Naive thymus-derived CD4-positive, alpha-beta T cell (primary cell): ENCODE measurements at regions of chr7 and their contacts with region 1.

Region 1: DNA sequence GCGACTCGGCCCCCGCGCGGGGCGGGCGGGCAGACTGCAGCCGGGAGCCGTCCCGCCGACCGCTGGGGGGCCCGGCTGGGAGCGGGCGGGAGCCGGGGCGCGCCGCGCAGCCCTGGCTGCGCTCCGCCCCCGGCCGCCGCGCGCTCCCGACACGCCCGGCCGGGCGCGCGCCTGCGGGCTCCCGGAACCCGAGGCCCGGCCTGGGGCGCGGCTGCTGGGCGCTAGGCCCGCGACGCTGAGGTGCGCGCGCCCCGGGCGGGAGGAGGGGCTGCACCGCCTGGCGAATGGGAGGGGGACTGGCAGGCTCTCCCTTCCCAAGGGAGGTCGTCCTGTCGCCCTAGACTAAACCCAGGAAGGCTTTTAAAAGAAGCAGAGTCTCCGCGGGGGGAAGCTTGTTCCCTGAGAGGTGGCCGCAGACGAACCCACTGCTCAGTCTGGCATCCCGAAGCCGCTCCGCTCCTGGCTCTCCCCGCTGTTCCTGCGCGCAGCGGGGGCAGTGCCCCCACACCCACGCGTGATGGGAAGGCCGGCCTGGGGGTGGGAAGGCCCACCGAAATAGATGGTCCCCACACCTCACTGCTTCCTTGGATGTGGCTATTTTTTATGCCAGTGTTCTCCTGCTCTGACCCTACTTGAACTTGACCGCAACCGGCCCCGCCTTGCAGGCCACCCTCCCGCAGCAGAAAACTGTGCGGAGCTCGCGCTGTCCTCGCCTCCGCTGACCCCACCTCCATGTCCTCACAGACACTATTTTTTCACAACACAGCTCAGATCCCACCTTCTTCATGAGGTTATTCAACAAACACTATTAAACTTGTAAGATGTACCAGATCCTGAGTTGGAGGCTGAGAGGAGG is at the start of gene VOPP1:
- DNase-seq: peak; percentile 40 to 79 (median 66)
- ATAC-seq: peak; percentile 81
- H3K4me3 ChIP-seq: peak within 1 kb of the TSS; percentile 87
- H3K4me3 Mint-ChIP-seq: peak within 1 kb of the TSS; percentile 87 to 100 (median 94)
- H3K27ac ChIP-seq: peak within 1 kb of the TSS; percentile 79
- H3K27ac Mint-ChIP-seq: peak within 1 kb of the TSS; percentile 85 to 96 (median 92)
- H3K4me1 ChIP-seq: peaks cover 42 to 45% of the 10 kb centered on the region in 2 donors
- H3K4me1 Mint-ChIP-seq: peaks cover 45 to 65% (median 60%) of the 10 kb centered on the region in 7 donors
- H3K27me3 ChIP-seq: no peaks in the 10 kb centered on the region
- H3K27me3 Mint-ChIP-seq: no peaks in the 10 kb centered on the region
- total RNA-seq, gene VOPP1: 66.2 to 111 (median 82.0) TPM

Region 2: DNA sequence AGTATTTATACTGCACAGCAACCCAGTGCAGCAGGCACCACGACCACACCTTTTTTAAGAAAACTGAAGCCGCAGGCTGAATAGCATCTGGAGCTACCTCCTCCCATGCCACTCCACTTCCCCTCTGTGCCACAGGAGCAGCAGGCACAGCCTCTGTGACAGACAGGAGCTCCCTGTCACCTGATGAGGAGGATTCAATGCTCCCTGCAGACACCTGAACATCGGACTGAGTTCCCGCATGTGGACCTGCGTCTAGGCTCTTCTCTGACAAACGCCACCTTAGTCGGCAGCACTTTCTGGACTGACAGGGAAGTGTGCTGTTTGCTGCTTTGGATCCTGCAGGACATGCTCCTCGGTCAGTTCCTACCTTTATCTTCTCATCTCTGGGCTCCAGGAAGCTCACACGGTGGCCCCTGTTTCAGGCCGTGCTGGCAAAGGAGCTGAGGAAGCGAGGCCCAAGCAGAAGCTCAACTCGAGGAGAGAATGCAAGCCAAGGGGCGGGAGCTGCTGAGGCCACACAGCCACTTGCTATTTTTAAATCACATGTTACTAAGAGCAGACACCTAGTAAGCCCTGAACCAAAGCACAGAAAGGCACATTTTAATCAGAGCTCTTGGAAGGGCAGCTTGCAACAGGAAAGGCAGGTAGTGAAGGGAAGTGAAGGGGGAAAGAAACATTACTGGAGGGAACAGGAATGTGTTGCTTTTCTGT is 56.9 kb before region 1 on chr7:
- CTCF ChIA-PET with region 1: no interaction called
- POLR2A ChIA-PET with region 1: interaction called, 6 read pairs
- intact Hi-C with region 1: loop called in 1 of 2 experiments (anchors 5 kb)
- DNase-seq: no peak
- ATAC-seq: no peak
- H3K4me3 ChIP-seq: no peak overlapping the region
- H3K4me3 Mint-ChIP-seq: peak overlapping the region in 1 of 10 donors; percentile 4
- H3K27ac ChIP-seq: no peak overlapping the region
- H3K27ac Mint-ChIP-seq: peak overlapping the region in 6 of 9 donors; percentile 8 to 59 (median 20)
- H3K4me1 ChIP-seq: peaks cover 0 to 23% of the 10 kb centered on the region in 2 donors
- H3K4me1 Mint-ChIP-seq: peaks cover 25 to 55% (median 47%) of the 10 kb centered on the region in 7 donors
- H3K27me3 ChIP-seq: no peaks in the 10 kb centered on the region
- H3K27me3 Mint-ChIP-seq: no peaks in the 10 kb centered on the region

Region 3: DNA sequence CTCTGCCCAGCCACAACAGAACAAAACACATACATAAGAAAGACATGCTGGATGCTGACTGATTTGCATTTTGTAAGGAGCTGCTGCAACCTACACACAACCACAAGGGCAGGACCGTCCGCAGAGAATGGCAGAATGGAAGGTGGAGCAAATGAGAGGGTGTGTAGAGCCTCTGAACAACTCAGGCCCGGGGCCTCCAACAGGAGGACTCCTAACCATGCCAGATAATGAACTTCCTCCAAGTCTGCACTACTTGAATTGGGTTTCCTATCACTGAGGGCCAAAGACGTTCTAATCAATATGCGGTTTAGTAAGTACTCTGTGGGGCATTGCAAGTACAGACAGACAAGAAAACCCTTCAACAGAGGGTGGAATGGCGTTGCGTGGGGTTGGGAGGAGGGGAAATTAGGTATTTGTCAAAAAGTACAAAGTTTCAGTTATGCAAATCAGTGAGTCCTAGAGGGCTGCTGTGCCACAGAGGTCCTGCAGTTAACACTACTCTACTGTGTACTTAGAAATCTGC is 14.9 kb before region 1 on chr7:
- CTCF ChIA-PET with region 1: no interaction called
- POLR2A ChIA-PET with region 1: interaction called, 5 read pairs
- intact Hi-C with region 1: loop called (anchors 1 to 2 kb)
- DNase-seq: no peak
- ATAC-seq: peak; percentile 45
- H3K4me3 ChIP-seq: no peak overlapping the region
- H3K4me3 Mint-ChIP-seq: peak overlapping the region in 4 of 10 donors; percentile 10 to 43 (median 14)
- H3K27ac ChIP-seq: no peak overlapping the region
- H3K27ac Mint-ChIP-seq: peak overlapping the region in 7 of 9 donors; percentile 20 to 89 (median 32)
- H3K4me1 ChIP-seq: peaks cover 25 to 37% of the 10 kb centered on the region in 2 donors
- H3K4me1 Mint-ChIP-seq: peaks cover 76 to 98% (median 95%) of the 10 kb centered on the region in 7 donors
- H3K27me3 ChIP-seq: no peaks in the 10 kb centered on the region
- H3K27me3 Mint-ChIP-seq: no peaks in the 10 kb centered on the region

Region 4: DNA sequence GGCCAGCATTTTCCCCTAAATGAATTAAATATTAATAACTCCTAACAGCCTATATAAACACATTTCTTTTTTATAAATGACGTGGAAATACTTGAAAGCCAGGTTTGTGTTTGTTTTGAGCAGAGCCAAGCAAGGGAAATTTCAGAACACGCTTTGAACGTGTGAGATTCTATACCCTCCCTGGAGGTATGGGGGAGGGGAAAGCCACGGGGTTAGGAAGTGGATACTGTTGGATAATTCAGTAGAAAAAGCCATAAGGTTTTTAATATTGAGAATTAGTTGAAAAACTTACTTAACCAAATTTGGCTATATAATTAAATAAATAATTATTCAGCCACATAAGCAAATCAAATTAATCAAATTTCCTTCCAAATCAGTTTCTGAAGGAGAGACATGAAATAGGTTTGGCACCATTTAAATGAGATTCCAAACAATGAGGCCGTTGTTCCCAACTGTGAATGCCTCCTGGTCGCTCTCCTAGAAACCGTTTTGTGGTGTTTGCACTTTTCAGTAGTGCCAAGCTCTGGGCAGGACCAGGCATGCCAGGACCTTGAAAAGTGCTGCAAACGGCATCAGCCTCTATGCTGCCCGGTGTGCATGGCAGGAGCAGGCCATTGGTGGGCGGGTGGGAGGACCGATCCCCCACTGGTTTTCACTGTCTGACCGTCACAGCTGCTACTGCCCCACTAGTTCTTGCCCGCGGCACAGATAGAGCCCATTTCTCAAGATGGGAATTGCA is 201.9 kb after region 1 on chr7:
- CTCF ChIA-PET with region 1: no interaction called
- POLR2A ChIA-PET with region 1: no interaction called
- intact Hi-C with region 1: no loop called
- DNase-seq: no peak
- ATAC-seq: no peak
- H3K4me3 ChIP-seq: no peak overlapping the region
- H3K4me3 Mint-ChIP-seq: no peak overlapping the region
- H3K27ac ChIP-seq: no peak overlapping the region
- H3K27ac Mint-ChIP-seq: no peak overlapping the region
- H3K4me1 ChIP-seq: no peaks in the 10 kb centered on the region
- H3K4me1 Mint-ChIP-seq: peaks cover 0 to 3% (median 0%) of the 10 kb centered on the region in 7 donors
- H3K27me3 ChIP-seq: no peaks in the 10 kb centered on the region
- H3K27me3 Mint-ChIP-seq: peaks cover 0 to 4% (median 0%) of the 10 kb centered on the region in 5 donors

Region 5: GRCh38 chr7:55887821-55888247 is 315.2 kb after region 1 on chr7:
- CTCF ChIA-PET with region 1: no interaction called
- POLR2A ChIA-PET with region 1: no interaction called
- intact Hi-C with region 1: loop called in 1 of 2 experiments (anchors 2 kb)
- DNase-seq: peak in 2 of 9 donors; percentile 2 to 6
- ATAC-seq: no peak
- H3K4me3 ChIP-seq: peak overlapping the region; percentile 46
- H3K4me3 Mint-ChIP-seq: peak overlapping the region; percentile 82 to 89 (median 86)
- H3K27ac ChIP-seq: peak overlapping the region; percentile 61
- H3K27ac Mint-ChIP-seq: peak overlapping the region; percentile 83 to 94 (median 90)
- H3K4me1 ChIP-seq: no peaks in the 10 kb centered on the region
- H3K4me1 Mint-ChIP-seq: peaks cover 0 to 10% (median 5%) of the 10 kb centered on the region in 7 donors
- H3K27me3 ChIP-seq: no peaks in the 10 kb centered on the region
- H3K27me3 Mint-ChIP-seq: no peaks in the 10 kb centered on the region

Region 6: GRCh38 chr7:56051339-56052191 is 479.0 kb after region 1 on chr7 and contains the starts of genes CCT6A and PSPH:
- CTCF ChIA-PET with region 1: no interaction called
- POLR2A ChIA-PET with region 1: interaction called, 4 read pairs
- intact Hi-C with region 1: loop called (anchors 5 kb)
- DNase-seq: peak; percentile 74 to 93 (median 78)
- ATAC-seq: peak; percentile 95
- H3K4me3 ChIP-seq: peak within 1 kb of the TSS; percentile 88
- H3K4me3 Mint-ChIP-seq: peak within 1 kb of the TSS; percentile 91 to 99 (median 96)
- H3K27ac ChIP-seq: peak within 1 kb of the TSS; percentile 91
- H3K27ac Mint-ChIP-seq: peak within 1 kb of the TSS; percentile 78 to 96 (median 93)
- H3K4me1 ChIP-seq: peaks cover 6 to 9% of the 10 kb centered on the region in 2 donors
- H3K4me1 Mint-ChIP-seq: peaks cover 26 to 59% (median 45%) of the 10 kb centered on the region in 7 donors
- H3K27me3 ChIP-seq: no peaks in the 10 kb centered on the region
- H3K27me3 Mint-ChIP-seq: no peaks in the 10 kb centered on the region
- total RNA-seq, gene CCT6A: 38.7 to 143 (median 58.6) TPM
- total RNA-seq, gene PSPH: 3.5 to 10.4 (median 6.5) TPM